ENCODE measurements at regions of chr4 and their contacts with region 1.

Region 1: DNA sequence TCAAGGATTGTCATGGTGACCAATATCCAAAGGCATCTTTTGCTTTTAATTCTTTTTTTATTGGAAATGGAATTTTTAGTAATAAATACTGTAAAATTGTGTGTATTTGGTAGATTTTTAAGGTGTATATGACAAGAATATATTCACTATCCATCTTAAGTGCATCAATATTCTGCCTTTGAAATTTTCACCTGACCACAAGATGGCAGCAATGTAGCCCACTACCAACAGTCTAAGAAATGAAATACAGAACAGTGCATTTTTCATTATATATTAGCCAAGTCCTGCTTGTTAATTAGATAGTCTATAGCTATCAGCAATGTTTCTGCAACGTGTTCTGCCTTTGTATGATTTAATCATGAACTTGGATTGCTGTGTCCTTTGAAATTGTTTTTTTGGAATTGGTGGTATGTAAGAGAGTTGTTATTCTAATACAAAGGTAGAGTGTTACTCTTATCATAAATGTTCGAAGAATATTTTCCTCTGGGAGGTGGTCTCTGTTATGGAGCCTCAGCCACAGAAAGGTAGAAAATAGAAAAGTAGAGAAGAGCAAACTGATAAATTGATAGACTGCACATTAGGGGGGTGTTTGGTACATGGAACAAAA is 38.2 kb downstream of the HPGDS start:
- DNase-seq: no peak
- ATAC-seq: no peak
- H3K4me3 ChIP-seq: no peak overlapping the region
- H3K27ac ChIP-seq: no peak overlapping the region
- H3K4me1 ChIP-seq: no peaks in the 10 kb centered on the region
- H3K27me3 ChIP-seq: no peaks in the 10 kb centered on the region

Region 2: GRCh38 chr4:93355411-93355810 is 949.1 kb before region 1 on chr4:
- intact Hi-C with region 1: no loop called
- DNase-seq: no peak
- ATAC-seq: no peak
- H3K4me3 ChIP-seq: no peak overlapping the region
- H3K27ac ChIP-seq: no peak overlapping the region
- H3K4me1 ChIP-seq: no peaks in the 10 kb centered on the region
- H3K27me3 ChIP-seq: no peaks in the 10 kb centered on the region

Region 3: DNA sequence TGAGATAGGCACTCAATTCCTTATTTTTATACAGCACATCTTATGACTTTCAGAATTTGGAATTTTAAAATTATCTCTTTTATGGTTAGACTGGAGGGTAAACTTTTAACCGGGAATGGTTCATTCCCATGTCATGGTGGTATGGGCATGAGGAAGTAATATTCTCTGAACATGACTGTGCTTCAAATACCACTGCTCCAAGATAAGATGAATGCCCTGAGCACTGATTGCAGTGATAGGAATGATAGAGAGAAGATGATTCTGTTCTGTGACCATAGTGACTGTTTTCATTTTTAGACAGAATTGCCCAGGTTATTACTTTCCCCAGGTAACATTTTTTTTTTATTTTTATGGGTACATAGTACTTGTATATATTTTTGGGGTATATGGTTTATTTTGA is 288.5 kb before region 1 on chr4:
- intact Hi-C with region 1: no loop called
- DNase-seq: no peak
- ATAC-seq: no peak
- H3K4me3 ChIP-seq: no peak overlapping the region
- H3K27ac ChIP-seq: no peak overlapping the region
- H3K4me1 ChIP-seq: no peaks in the 10 kb centered on the region
- H3K27me3 ChIP-seq: no peaks in the 10 kb centered on the region

Region 4: DNA sequence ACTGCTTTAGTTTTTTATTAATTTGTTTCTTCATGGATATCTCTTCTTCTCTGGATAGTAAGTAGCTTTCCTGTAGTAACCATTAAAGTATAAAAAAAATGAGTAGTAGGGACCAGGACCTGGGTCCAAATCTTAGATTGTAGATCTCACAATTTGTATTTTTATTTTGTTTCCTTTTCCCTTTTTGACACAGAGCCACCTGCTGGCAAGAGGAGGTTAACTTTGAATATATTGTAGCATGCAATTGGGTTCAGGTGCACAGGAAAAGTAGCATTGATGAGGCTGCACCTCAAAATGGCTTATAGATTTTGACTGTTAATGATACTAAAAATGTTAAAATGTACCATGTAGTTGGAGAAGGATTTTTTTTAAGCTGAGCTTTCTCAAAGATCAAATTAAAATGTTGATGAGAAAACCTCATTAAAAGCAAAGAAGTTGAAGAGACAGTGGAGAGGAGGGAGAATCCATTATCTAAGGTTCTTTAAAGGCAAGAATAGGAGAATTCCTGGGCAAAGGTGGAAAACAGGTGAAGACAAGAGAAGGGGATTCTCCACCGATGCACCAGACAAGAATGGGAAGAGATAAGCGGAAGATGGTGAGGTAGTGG is 86.4 kb after region 1 on chr4:
- intact Hi-C with region 1: loop called in 1 of 2 experiments (anchors 10 kb)
- DNase-seq: no peak
- ATAC-seq: no peak
- H3K4me3 ChIP-seq: no peak overlapping the region
- H3K27ac ChIP-seq: no peak overlapping the region
- H3K4me1 ChIP-seq: no peaks in the 10 kb centered on the region
- H3K27me3 ChIP-seq: no peaks in the 10 kb centered on the region

Region 5: DNA sequence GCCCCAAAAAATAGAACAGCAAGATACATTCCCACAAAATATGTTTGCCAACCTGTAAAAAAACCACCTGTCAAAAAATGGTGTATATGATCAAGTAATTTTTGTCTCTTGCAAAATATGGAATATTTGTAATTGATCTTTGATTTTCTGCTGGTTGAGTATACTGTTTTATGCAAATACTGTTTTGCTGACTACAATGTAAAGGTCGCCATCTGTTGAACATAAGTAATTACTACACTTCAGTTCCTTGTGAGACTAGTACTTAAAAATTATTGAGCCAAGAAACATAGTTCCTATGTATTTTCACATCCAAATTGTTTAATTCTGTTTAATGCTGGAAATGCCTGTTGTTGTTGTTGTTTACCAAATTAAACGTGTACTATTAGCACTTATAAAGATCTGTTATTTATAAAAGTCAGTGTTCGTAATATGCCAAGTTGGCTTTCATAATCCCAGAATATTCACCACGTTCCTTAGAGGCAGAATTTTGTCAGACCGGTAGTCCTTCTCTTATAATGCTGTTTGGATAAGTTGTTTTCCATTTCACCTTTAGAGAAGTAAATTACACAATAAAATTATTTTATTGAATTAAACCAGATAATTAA is 291.5 kb after region 1 on chr4:
- intact Hi-C with region 1: loop called in 1 of 2 experiments (anchors 10 kb)
- DNase-seq: no peak
- ATAC-seq: peak; percentile 77
- H3K4me3 ChIP-seq: no peak overlapping the region
- H3K27ac ChIP-seq: no peak overlapping the region
- H3K4me1 ChIP-seq: peaks cover 1 to 5% of the 10 kb centered on the region in 2 donors
- H3K27me3 ChIP-seq: no peaks in the 10 kb centered on the region

Region 6: DNA sequence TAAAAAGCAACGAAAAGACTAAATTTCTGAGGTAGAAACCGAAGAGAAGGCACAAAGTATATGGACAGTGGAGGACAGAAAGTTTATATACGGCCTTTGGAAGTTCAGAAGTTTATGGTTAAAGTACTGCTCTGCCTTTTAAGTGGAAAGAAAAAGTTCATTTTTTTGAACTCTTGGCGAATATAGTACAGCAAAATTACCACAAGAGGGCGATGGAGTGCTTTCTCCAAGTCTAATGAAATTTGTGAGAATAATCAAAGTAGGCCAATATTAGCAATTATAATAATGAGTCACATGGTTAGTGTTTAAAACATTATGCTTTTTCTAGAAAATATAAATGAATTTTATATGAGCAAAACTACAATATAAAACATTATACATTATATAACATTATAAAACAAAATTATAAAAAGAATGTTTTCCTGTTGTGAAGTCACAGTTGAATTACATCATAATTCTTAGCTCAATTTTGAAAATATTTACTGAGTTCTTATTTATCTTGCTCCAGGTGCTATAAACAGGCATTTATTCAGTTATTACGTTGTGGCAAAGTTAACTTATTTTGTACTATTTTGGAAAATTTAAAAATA is 317.1 kb after region 1 on chr4:
- intact Hi-C with region 1: loop called in 1 of 2 experiments (anchors 10 kb)
- DNase-seq: no peak
- ATAC-seq: no peak
- H3K4me3 ChIP-seq: no peak overlapping the region
- H3K27ac ChIP-seq: no peak overlapping the region
- H3K4me1 ChIP-seq: no peaks in the 10 kb centered on the region
- H3K27me3 ChIP-seq: no peaks in the 10 kb centered on the region

Measured in aorta (tissue), 5 donors.